PC-3 (cell line): ENCODE measurements at regions of chr1 and their contacts with region 1.

Region 1: DNA sequence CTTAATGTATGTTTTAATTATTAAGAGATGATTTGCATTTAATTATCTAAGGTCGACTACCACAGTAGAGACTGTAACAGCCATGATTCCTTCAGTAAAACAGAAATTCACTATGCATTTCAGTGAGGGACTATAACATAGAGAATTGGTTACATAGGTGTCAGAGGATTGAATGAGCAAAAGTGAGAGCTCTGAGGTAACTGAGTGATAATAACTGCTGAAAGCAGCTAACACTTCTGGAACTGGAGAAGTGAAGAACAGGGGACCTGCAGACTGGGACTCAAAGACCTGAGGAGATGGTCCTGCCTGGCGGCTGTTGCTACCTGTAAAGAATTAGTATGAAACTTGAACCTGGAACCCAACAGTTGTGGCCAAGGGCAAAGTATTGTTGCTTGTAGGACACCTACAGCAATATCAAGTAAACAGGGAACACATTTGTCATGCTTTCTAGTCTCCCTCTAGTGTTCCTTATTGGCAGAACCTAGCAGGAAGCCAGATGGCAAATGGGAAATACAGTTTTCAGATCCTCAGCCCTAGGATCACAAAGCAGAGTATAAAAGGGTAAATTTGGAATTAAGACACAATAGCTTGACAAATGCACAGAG is 110.6 kb downstream of the HS2ST1 start:
- DNase-seq: peak; percentile 62
- ATAC-seq: peak; percentile 85
- H3K4me3 ChIP-seq: no peak overlapping the region
- H3K27ac ChIP-seq: no peak overlapping the region
- H3K4me1 ChIP-seq: 0 out of 2 replicates have a peak, but pooled peaks cover 6% of the 10 kb centered on the region
- H3K27me3 ChIP-seq: no peaks in the 10 kb centered on the region
- CTCF ChIP-seq: peak; percentile 73

Region 2: DNA sequence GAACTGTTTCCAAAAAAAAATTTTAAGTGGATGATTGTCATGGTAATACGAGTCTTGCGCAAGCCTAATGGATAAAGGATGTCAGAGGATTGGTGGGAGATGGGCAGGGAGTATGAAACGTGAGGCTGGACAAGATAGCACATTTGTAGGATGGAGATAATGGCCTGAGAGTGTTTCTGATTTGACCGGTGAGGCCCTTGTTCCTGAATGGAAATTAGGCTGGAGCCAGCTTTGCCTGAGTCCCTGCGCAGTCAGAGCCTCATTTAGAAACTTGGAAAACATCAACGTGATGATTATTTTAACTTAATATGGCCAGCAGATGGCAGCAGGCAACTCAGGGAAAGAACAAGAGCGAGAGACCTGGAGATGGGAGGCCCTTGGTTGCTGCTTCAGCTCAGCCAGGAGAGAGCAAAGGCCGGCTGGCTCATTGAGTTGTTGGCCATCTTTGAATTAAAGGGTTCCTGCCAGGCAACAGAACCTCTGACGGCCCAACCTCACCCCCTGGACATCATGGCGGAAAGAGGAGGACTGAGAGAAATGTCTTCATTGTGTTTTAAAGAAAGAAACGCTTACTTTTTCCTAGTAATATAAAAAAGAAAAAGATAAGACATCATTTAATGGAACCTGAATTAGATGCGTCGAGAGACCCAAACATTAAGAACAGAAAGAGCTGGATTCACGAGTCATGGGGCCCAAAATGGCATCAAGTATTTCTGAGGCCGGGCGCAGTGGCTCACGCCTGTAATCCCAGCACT is 191.4 kb before region 1 on chr1:
- CTCF ChIA-PET with region 1: no interaction called
- POLR2A ChIA-PET with region 1: no interaction called
- intact Hi-C with region 1: loop called (anchors 1 kb)
- DNase-seq: peak; percentile 88
- ATAC-seq: peak; percentile 96
- H3K4me3 ChIP-seq: no peak overlapping the region
- H3K27ac ChIP-seq: no peak overlapping the region
- H3K4me1 ChIP-seq: no peaks in the 10 kb centered on the region
- H3K27me3 ChIP-seq: no peaks in the 10 kb centered on the region
- CTCF ChIP-seq: peak; percentile 81

Region 3: DNA sequence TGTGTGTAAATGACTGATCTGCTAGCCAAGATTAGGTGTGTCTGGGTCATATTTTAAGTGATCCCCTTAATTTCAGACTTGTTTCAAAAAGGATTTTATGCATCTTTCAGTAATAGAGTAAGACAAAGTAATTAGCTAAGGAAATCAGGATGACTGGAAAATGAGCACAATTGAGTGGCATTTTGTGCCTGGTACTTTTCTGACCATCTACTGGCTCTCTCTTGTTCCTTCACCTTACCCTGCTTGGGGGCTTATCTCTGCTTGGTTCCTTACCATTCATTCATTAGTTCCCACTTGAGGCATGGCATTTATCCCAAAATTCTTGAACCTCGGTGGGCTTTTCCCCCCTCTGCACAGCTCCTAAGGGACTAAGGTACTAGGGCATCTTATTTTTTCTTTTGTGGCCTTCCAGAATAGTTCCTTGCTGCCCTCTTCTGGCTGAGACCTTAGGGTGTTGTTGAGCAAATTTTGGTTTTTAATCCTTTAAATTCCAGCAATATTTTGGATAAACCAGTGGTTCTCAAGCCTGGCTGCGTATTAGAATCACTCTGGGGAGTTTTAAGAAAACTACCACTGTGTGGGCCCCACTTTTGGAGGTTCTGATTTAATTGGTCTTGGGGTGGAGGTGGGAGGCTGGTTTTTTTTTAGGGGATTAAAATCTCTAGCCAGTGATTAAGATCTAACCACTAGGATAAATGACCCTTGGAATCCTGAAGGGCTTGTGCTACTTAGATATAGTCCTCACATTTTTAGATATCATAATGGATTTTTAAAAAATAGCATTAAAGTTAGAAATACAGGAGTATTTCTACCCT is 59.8 kb before region 1 on chr1:
- CTCF ChIA-PET with region 1: no interaction called
- POLR2A ChIA-PET with region 1: no interaction called
- intact Hi-C with region 1: loop called (anchors 2 kb)
- DNase-seq: peak; percentile 57
- ATAC-seq: peak; percentile 61
- H3K4me3 ChIP-seq: no peak overlapping the region
- H3K27ac ChIP-seq: no peak overlapping the region
- H3K4me1 ChIP-seq: no peaks in the 10 kb centered on the region
- H3K27me3 ChIP-seq: no peaks in the 10 kb centered on the region
- CTCF ChIP-seq: peak; percentile 85

Region 4: DNA sequence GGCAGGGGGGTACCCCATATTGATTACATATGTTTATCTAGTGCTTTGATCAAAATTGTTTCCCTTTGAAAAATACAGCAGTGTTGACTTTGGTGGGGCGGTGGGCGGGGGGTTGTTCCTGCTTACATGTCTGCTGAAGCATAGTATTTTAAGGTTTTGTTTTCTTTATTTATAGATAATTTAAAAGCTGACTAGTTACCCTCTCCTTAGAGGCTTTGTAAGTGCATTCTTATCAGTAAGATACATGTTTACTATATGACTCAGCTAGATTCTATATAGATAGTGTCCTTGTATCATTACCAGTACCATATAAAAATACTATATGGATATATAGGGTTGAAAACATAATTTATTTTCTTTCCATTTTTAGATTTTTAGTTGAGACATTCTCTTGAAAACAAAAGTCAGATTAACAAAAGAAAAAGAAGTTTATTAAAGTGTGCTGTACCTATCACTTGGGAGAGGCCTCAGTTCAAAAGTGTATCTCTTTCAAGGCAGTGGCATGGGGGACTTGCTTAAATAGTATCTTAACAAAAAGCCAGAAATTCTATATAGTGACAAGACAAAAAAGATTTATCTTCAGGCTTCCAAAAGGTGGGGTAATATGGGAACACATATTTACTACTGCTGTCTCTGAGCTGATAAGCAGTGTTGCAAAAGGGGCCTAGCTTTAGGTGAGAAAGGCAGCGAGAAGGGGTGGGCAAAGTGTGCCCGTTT is 31.6 kb before region 1 on chr1:
- CTCF ChIA-PET with region 1: no interaction called
- POLR2A ChIA-PET with region 1: no interaction called
- intact Hi-C with region 1: loop called (anchors 5 kb)
- DNase-seq: peak; percentile 42
- ATAC-seq: peak; percentile 68
- H3K4me3 ChIP-seq: peak overlapping the region; percentile 4; the same call in 1 of the 2 replicates
- H3K27ac ChIP-seq: peak overlapping the region; percentile 14
- H3K4me1 ChIP-seq: peaks cover 19% of the 10 kb centered on the region
- H3K27me3 ChIP-seq: no peaks in the 10 kb centered on the region
- CTCF ChIP-seq: no peak

Region 5: DNA sequence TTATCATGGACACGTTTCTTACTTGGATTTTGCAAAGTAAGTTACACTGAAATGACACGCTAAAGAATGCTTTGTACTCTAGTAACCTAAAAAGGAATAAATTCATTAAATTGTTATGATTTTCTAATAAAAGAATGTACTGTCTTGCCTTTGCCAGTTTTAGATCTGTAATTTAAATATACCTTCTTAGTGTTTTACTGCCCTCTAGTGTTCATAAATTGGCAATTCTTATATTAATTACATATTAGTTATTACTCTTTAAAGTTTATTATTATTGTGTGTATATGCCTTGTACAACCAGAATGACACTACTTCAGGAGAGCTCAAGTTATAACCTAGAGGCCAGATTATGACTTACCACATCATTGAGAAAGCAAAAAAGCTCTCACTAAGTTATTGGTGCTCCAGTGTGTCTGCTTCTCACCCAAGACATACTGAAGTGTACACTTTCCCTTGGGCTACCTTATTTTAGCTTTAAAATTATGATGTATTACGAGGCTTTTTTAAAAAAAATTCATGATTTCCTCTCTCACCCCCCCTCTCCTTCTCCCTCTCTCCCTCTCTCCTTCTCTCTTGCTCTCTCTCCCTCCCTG is 59.3 kb after region 1 on chr1:
- CTCF ChIA-PET with region 1: no interaction called
- POLR2A ChIA-PET with region 1: no interaction called
- intact Hi-C with region 1: loop called (anchors 5 kb)
- DNase-seq: peak; percentile 71
- ATAC-seq: peak; percentile 45
- H3K4me3 ChIP-seq: no peak overlapping the region
- H3K27ac ChIP-seq: no peak overlapping the region
- H3K4me1 ChIP-seq: peaks cover 7% of the 10 kb centered on the region
- H3K27me3 ChIP-seq: no peaks in the 10 kb centered on the region
- CTCF ChIP-seq: peak; percentile 51

Region 6: GRCh38 chr1:87880747-87881133 is 855.7 kb after region 1 on chr1:
- CTCF ChIA-PET with region 1: no interaction called
- POLR2A ChIA-PET with region 1: interaction called, 10 read pairs
- intact Hi-C with region 1: no loop called
- DNase-seq: peak; percentile 45
- ATAC-seq: peak; percentile 54
- H3K4me3 ChIP-seq: no peak overlapping the region
- H3K27ac ChIP-seq: no peak overlapping the region
- H3K4me1 ChIP-seq: peaks cover 10% of the 10 kb centered on the region
- H3K27me3 ChIP-seq: no peaks in the 10 kb centered on the region
- CTCF ChIP-seq: no peak